ENCODE measurements at regions of chr17 and their contacts with region 1.

Region 1: DNA sequence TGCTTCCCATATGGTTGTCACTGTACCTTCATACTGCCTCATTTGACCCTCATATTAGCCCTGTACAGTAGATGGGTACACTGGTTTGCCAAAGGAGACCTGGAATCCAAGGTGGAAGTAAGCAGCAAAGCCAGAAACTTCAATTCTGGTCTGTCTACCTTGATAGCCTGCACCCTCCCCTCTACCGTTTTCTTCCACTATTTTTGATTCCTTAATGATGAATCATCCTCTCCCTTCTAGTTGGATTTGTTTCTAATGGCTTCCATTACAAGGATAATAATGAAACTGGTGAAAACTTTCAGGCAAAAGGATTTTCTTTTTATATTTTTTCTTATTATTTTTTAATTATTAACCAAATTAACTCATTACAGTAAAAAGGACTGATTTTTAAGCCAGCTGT is 17.3 kb downstream of the TAC4 start:
- DNase-seq: no peak
- H3K4me3 ChIP-seq: no peak overlapping the region
- H3K27ac ChIP-seq: peak overlapping the region; percentile 77
- H3K4me1 ChIP-seq: peaks cover 76% of the 10 kb centered on the region
- H3K27me3 ChIP-seq: no peaks in the 10 kb centered on the region
- CTCF ChIP-seq: no peak
- POLR2A ChIP-seq: no peak

Region 2: GRCh38 chr17:49815761-49816281 is 14.8 kb before region 1 on chr17:
- CTCF ChIA-PET with region 1: interaction called, 6 read pairs
- POLR2A ChIA-PET with region 1: no interaction called
- dilution Hi-C with region 1: no loop called
- intact Hi-C with region 1: loop called (anchors 2 kb)
- DNase-seq: peak; percentile 53
- H3K4me3 ChIP-seq: peak overlapping the region in 2 of 3 experiments; percentile 2 to 26
- H3K27ac ChIP-seq: peak overlapping the region; percentile 60
- H3K4me1 ChIP-seq: peaks cover 47% of the 10 kb centered on the region
- H3K27me3 ChIP-seq: no peaks in the 10 kb centered on the region
- CTCF ChIP-seq: no peak
- POLR2A ChIP-seq: no peak

Region 3: DNA sequence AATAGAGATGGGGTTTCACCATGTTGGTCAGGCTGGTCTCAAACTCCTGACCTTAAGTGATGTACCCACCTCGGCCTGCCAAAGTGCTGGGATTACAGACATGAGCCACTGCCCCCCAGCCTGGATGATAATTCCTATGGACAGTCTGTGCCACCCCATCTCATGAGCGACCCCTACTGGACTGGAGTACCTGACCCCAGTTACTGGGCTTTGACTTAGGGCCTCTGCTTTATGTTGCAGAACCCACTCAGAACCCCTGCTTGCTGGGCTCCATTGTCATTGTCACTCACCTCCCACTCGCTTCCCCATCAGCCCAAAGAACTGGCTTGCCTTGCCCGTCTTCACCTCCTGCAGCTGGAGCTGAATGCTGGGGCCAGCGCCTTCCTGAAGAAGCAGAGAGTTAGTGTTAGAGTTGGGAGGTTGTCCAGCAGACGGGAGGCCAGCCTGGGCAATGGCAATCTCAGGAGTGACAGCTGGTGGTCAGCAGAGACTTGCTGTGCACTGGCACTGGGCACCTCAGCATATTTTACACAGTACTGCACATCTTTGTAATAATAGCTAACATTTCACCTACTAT is 13.3 kb after region 1 on chr17:
- CTCF ChIA-PET with region 1: interaction called, 4 read pairs
- POLR2A ChIA-PET with region 1: no interaction called
- dilution Hi-C with region 1: no loop called
- intact Hi-C with region 1: loop called (anchors 1 kb)
- DNase-seq: peak; percentile 39
- H3K4me3 ChIP-seq: no peak overlapping the region
- H3K27ac ChIP-seq: no peak overlapping the region
- H3K4me1 ChIP-seq: peaks cover 8% of the 10 kb centered on the region
- H3K27me3 ChIP-seq: no peaks in the 10 kb centered on the region
- CTCF ChIP-seq: peak; percentile 66 to 69
- POLR2A ChIP-seq: no peak

Region 4: DNA sequence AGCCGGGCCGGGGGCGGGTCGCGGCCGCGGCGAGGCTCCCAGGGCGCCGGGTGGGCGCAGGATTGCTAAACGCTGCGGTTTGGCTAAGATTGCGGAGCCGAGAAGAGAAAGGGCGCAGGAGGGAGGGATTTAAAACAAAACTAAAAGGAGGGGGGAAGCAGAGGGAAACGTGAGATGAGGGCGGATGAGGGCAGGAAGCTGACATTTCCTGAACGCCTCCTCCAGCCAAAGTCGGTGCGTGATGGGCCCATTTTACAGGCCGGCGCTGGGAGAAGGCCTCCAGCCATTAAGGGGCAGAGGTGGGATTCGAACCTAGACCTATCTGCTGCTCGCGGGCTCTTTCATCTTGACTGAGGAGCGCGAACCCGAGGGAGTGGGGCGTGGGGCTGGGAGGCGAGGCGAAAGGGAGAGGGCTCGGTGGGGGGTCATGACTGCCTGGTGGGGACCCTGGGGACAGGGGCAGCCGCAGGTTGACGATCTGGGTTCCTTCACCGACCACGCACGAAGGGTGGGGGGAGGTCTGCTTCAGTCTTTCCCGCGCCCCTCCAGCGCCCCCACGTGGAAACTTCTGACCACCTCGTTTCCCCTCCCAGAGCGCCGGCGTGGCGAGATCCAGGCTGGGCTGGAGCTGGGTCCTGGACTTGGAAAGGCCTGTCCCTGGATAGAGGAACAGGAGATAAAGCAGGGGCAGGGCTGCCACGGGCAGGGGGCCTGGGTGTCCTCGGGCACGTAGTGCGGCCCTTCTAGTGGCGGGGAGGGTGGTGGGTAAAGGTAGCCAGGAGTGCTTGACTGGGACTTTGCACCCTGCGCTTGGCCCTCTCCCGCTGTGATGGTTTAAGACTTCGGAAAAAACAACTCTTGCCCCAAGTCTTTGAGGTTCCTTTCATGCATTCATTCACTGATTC is 21.0 kb after region 1 on chr17:
- CTCF ChIA-PET with region 1: interaction called, 10 read pairs
- POLR2A ChIA-PET with region 1: no interaction called
- dilution Hi-C with region 1: no loop called
- intact Hi-C with region 1: no loop called
- DNase-seq: peak; percentile 73
- H3K4me3 ChIP-seq: peak overlapping the region; percentile 18 to 41 (median 36)
- H3K27ac ChIP-seq: peak overlapping the region; percentile 1
- H3K4me1 ChIP-seq: peaks cover 6% of the 10 kb centered on the region
- H3K27me3 ChIP-seq: no peaks in the 10 kb centered on the region
- CTCF ChIP-seq: peak; percentile 71 to 92
- POLR2A ChIP-seq: no peak